Heart left ventricle (tissue), 16 donors: ENCODE measurements at regions of chr5 and their contacts with region 1.

Region 1: GRCh38 chr5:174935854-174936474 is 211.6 kb downstream of the MSX2 start:
- DNase-seq: peak; percentile 40 to 72 (median 46)
- ATAC-seq: peak in 3 of 4 donors; percentile 72 to 80 (median 80)
- H3K4me3 ChIP-seq: no peak overlapping the region
- H3K27ac ChIP-seq: no peak overlapping the region
- H3K4me1 ChIP-seq: no peaks in the 10 kb centered on the region
- H3K27me3 ChIP-seq: peaks cover 0 to 16% (median 0%) of the 10 kb centered on the region in 9 donors
- CTCF ChIP-seq: peak; percentile 75 to 93 (median 86)
- POLR2A ChIP-seq: no peak

Region 2: GRCh38 chr5:174910245-174910737 is 25.7 kb before region 1 on chr5:
- intact Hi-C with region 1: loop called in 4 of 10 experiments (anchors 1 to 2 kb)
- DNase-seq: peak; percentile 45 to 78 (median 66)
- ATAC-seq: peak; percentile 78 to 99 (median 90)
- H3K4me3 ChIP-seq: peak overlapping the region in 3 of 12 donors; percentile 12 to 25 (median 19)
- H3K27ac ChIP-seq: no peak overlapping the region
- H3K4me1 ChIP-seq: peaks cover 0 to 6% (median 0%) of the 10 kb centered on the region in 12 donors
- H3K27me3 ChIP-seq: peaks cover 0 to 10% (median 0%) of the 10 kb centered on the region in 9 donors
- CTCF ChIP-seq: peak; percentile 70 to 93 (median 88)
- POLR2A ChIP-seq: no peak